B cell (primary cell): ENCODE measurements at regions of chrX and their contacts with region 1.

Region 1: DNA sequence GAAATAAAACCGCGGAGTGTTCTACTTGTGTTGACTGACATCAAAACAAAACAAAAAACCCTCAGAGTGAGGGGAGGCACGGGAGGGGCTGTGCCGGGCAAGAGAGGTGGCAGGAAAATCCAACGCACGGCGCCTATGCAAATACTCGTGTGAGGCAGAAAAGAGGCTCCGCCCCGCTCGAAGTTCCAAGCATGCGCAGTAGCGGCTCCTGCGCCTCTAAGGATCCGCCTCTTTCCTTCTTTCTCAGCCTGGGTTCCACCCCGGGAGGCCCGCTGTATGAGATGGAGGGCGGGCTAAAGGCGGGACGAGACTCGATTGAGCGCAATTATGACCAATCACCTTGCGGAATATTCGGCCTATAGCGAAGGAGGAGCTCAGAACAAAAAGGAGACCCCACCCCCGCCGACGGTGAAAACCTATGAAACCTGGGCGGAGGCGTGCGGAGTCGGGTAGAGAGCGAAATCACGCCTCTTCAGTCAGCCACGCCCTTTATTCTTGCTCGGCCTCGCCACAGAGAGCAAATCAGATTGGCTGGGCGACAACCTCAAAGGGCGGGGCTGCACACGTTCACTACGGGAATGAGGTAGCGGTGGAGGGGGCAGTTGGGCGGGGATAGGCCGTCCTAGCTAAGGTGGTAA is 720 bp upstream of the CDK16 start:
- DNase-seq: peak; percentile 96
- ATAC-seq: peak; percentile 80
- H3K4me3 ChIP-seq: peak overlapping the region; percentile 69 to 83 (median 80)
- H3K4me3 Mint-ChIP-seq: peak overlapping the region; percentile 96
- H3K27ac ChIP-seq: peak overlapping the region; percentile 94 to 99
- H3K27ac Mint-ChIP-seq: peak overlapping the region; percentile 100
- H3K4me1 ChIP-seq: peaks cover 26 to 27% of the 10 kb centered on the region in 2 donors
- H3K4me1 Mint-ChIP-seq: peaks cover 39% of the 10 kb centered on the region
- H3K27me3 ChIP-seq: no peaks in the 10 kb centered on the region
- H3K27me3 Mint-ChIP-seq: no peaks in the 10 kb centered on the region
- CTCF ChIP-seq: no peak

Region 2: GRCh38 chrX:47233337-47234113 is 15.8 kb after region 1 on chrX:
- CTCF ChIA-PET with region 1: no interaction called
- POLR2A ChIA-PET with region 1: interaction called, 16 read pairs
- intact Hi-C with region 1: loop called (anchors 1 kb)
- DNase-seq: peak; percentile 96
- ATAC-seq: peak; percentile 88
- H3K4me3 ChIP-seq: peak overlapping the region; percentile 67 to 82 (median 75)
- H3K4me3 Mint-ChIP-seq: peak overlapping the region; percentile 94
- H3K27ac ChIP-seq: peak overlapping the region; percentile 96 to 99
- H3K27ac Mint-ChIP-seq: peak overlapping the region; percentile 99
- H3K4me1 ChIP-seq: peaks cover 0 to 8% of the 10 kb centered on the region in 2 donors
- H3K4me1 Mint-ChIP-seq: peaks cover 21% of the 10 kb centered on the region
- H3K27me3 ChIP-seq: no peaks in the 10 kb centered on the region
- H3K27me3 Mint-ChIP-seq: no peaks in the 10 kb centered on the region
- CTCF ChIP-seq: no peak

Region 3: GRCh38 chrX:48068096-48068887 is 850.5 kb after region 1 on chrX:
- CTCF ChIA-PET with region 1: no interaction called
- POLR2A ChIA-PET with region 1: no interaction called
- intact Hi-C with region 1: no loop called
- DNase-seq: no peak
- ATAC-seq: no peak
- H3K4me3 ChIP-seq: no peak overlapping the region
- H3K4me3 Mint-ChIP-seq: no peak overlapping the region
- H3K27ac ChIP-seq: no peak overlapping the region
- H3K27ac Mint-ChIP-seq: no peak overlapping the region
- H3K4me1 ChIP-seq: peaks cover 6 to 9% of the 10 kb centered on the region in 2 donors
- H3K4me1 Mint-ChIP-seq: no peaks in the 10 kb centered on the region
- H3K27me3 ChIP-seq: no peaks in the 10 kb centered on the region
- H3K27me3 Mint-ChIP-seq: no peaks in the 10 kb centered on the region
- CTCF ChIP-seq: no peak